ENCODE measurements at regions of chr18 and their contacts with region 1.

Region 1: DNA sequence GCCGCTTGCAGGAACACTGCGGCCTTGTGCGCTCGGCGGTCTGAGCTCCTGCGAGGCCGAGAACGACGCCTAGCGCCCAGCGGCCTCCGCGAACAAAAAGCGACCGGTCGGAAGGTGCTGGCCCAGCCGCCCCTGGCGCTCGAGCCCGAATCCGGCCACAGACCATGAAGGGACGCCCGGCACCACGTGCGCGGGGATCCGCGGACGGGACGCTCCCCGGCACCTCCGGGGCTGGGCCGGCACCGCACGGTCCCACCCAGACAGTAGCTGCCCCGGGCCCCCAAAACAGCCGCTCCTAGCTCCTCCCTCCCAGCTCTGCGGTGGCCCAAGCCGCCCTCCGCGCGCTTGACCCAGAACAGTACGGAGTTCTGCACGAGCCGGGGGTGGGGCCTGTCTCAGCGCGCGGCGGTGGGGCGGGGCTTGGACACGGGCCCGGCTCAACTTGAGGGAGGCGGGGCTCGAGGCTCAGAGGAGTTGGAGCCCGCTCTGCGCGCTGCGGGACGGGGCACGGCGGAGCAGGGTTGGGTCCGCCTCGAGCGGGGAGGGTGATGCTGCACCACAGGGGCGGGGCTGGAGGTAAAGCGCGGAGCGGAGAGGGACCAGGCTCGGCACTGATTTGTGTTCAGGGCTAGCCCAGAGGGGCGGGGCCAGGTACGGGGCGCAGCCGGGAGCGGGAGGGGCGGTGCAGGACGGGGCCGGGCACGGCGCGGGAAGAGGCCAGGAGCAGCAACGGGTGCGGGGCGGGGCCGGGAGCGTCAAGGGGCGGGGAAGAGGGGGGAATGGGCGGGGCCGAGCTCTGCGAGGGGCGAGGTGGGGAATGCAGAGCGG is 538 bp upstream of the IMPA2 start:
- DNase-seq: peak; percentile 67 to 97 (median 80)

Region 2: GRCh38 chr18:11891737-11892136 is 89.0 kb before region 1 on chr18:
- intact Hi-C with region 1: no loop called
- DNase-seq: no peak

Region 3: DNA sequence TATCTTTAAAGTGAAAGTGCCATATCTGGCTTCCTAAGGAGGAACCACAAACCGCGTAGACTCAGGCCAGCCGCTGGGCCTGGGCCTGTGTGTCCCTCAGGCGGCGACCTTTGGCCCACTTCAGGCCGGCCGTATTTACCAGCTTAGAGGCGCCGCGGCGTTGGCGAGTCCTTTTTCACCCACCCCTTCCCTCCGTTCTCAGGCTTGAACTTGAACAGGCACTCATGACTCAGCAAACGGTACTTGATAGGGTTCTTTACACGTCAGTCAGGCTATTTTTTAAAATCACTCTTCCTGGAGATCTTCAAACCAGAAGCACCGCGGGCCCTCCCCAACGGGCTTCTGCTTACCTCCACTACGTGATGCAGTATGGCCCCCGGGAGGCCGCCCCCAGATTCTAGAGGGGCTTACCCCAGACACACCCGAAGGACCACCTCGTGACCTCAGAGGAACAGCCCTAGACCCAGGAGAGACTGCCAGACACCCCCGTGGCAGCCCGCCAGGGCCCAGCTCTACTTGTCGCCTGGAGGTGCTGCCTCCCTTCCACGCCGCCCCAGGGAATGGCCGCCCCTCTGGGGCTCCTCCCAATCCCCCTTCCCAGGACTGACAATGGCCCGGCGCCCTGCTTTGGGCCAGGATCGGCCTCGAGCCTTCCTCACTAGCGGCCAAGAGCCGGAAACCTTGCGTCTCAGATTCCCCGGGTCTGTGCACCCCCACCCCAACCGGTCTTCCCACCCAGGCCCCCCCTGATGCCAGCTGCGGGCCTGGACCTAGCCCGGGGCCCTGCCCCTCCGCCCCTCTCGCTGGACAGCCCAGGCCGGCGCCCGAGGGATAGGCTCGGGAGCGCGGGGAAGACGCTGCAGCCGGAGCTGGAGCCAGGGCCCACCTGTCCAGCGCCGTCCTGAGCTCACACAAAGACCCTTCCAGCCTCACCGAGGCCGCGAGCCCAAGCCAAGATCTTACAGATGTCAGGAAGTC is 33.3 kb before region 1 on chr18:
- intact Hi-C with region 1: loop called (anchors 5 kb)
- DNase-seq: peak; percentile 58 to 97 (median 78)